ENCODE measurements at regions of chr6 and their contacts with region 1.

Region 1: GRCh38 chr6:158972241-158973233 is 27.5 kb downstream of the RSPH3 start:
- DNase-seq: peak; percentile 35
- ATAC-seq: peak; percentile 63; the same call in 1 of the 2 replicates
- H3K4me3 ChIP-seq: no peak overlapping the region
- H3K27ac ChIP-seq: no peak overlapping the region
- H3K4me1 ChIP-seq: no peaks in the 10 kb centered on the region
- H3K27me3 ChIP-seq: no peaks in the 10 kb centered on the region
- CTCF ChIP-seq: peak; percentile 43; the same call in 1 of the 2 replicates

Region 2: DNA sequence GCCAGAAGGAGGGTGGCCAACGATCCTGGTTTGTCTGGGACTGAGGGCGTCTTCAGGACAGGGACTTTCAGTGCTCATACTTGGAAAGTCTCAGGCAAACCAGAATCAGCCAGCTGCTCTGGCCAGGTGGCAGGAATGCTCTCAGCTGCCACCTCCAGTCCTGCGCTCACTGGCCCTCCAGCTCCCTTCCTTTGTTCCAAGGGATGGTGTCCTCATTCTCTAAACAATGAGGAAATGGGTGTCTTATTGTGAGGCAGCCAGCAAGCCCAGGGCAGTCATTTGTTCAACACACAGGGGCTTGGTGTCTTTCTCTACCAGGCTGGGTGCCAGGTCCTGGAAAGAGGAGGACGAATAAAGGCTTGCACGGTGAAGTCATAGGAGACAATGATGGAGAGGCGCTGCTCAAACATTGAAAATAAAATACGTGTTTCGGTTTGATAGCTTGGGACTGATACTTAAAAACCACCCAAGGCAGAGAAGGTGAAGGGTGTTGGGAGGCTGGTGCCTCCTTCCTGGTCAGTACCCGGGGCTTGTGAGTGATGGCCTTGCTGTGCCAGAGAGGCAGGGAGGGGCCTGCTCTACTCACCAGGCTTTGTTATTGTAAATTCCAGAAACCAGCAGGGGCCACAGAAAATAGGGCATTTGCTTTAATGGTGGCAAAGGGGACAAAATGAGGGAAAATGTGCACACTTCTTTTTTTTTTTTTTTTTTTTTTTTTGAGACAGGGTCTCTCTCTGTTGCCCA is 423.9 kb before region 1 on chr6:
- CTCF ChIA-PET with region 1: no interaction called
- POLR2A ChIA-PET with region 1: no interaction called
- in situ Hi-C with region 1: no loop called
- intact Hi-C with region 1: no loop called
- DNase-seq: no peak
- ATAC-seq: no peak
- H3K4me3 ChIP-seq: no peak overlapping the region
- H3K27ac ChIP-seq: no peak overlapping the region
- H3K4me1 ChIP-seq: peaks cover 3% of the 10 kb centered on the region; the same call in 1 of the 2 replicates
- H3K27me3 ChIP-seq: no peaks in the 10 kb centered on the region
- CTCF ChIP-seq: no peak

Region 3: DNA sequence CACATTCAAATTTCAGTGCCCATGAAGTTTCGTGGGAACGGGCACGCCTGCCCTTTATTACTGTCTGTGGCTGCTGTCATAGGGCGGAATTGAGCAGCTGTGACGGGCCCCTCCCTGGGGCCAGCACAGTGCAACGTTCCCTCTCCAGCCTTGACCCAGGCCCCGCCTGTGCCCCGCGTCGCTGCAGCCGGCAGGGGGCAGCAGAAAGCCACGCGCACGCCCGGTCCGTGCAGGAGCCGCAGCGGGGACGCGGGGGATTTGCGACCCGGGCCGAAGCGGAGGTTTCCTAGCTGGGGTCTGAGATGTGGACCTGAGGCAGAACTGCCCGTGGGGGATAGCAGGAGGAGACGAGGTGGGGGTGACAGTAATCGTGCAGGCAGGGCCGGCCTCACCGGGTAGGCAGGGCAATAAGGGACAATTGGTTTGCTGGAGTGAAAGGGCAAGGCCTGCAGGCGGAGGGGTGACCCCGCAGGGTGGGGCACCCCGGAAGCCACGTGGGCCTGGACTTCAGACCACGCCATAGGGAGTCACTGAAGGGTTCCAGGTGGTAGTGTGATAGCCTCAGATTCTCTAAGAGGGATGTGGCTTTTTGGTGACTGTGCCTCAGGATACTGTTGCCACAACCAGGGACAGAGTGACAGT is 268.2 kb before region 1 on chr6:
- CTCF ChIA-PET with region 1: no interaction called
- POLR2A ChIA-PET with region 1: no interaction called
- in situ Hi-C with region 1: no loop called
- intact Hi-C with region 1: loop called (anchors 1 kb)
- DNase-seq: peak; percentile 43
- ATAC-seq: peak; percentile 97
- H3K4me3 ChIP-seq: peak overlapping the region; percentile 41 to 65
- H3K27ac ChIP-seq: no peak overlapping the region; the same call in 1 of the 2 replicates
- H3K4me1 ChIP-seq: peaks cover 17% of the 10 kb centered on the region
- H3K27me3 ChIP-seq: no peaks in the 10 kb centered on the region
- CTCF ChIP-seq: peak; percentile 100

Region 4: DNA sequence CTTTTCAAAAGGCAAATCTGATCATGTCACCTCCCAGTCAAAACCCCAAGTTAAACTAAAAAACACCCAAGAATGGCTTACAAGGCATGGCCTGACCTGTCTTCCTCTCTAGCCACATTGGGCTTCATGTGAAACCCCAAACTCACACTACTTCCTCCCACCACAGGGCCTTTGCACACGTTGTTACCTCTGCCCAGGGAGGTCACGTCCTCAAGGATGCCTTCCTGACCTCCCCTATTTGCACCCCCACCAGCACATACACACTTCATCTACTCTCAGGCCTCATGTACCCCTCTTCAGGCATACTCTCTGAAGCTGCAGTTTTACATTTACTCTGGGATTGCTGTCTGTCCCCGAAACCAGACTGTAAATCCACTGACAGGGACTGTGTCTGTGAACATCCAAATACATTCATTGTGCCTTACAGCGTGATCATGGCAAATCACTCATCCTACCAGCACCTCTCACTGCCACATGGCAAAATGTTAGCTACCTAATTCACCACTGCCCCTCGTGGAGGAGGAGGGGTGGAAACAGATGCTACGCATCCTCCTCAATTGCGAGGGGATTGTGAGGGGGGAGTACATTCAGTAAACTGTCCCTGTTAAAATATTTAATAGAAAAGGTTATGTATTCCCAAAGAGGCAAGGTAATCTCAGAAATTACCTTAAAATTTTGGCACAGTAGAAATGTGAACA is 159.4 kb before region 1 on chr6:
- CTCF ChIA-PET with region 1: no interaction called
- POLR2A ChIA-PET with region 1: no interaction called
- in situ Hi-C with region 1: no loop called
- intact Hi-C with region 1: loop called (anchors 5 kb)
- DNase-seq: no peak
- ATAC-seq: no peak
- H3K4me3 ChIP-seq: no peak overlapping the region
- H3K27ac ChIP-seq: no peak overlapping the region
- H3K4me1 ChIP-seq: peaks cover 73% of the 10 kb centered on the region
- H3K27me3 ChIP-seq: no peaks in the 10 kb centered on the region
- CTCF ChIP-seq: no peak

Measured in Panc1 (cell line).